ENCODE measurements at regions of chr3 and their contacts with region 1.

Region 1: DNA sequence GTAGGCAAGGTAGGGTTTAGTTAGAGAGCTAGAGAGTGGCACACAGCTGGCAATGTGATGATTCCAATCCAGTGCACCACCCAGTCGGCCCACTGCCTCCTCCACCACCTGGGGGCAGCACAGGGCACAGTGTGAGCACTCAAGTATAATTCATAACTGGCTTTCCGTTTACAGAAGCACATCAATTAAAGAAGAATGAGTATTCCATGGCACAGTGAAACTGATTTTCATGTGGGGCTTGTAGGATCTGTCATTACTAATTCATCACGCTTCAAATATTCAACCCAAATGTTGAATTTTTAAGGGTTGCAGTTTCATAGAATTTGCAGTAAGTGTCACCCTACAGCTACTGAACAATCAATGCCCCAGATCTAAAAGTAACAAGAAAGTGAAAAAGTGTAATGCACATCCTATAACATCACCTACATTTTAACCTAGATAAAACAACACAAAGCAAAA is 149.9 kb downstream of the IGSF11 start:
- DNase-seq: peak; percentile 87
- ATAC-seq: peak; percentile 87
- H3K4me3 Mint-ChIP-seq: no peak overlapping the region
- H3K27ac Mint-ChIP-seq: no peak overlapping the region
- H3K4me1 Mint-ChIP-seq: peaks cover 5% of the 10 kb centered on the region
- H3K27me3 Mint-ChIP-seq: peaks cover 12% of the 10 kb centered on the region
- CTCF ChIP-seq: peak; percentile 92

Region 2: DNA sequence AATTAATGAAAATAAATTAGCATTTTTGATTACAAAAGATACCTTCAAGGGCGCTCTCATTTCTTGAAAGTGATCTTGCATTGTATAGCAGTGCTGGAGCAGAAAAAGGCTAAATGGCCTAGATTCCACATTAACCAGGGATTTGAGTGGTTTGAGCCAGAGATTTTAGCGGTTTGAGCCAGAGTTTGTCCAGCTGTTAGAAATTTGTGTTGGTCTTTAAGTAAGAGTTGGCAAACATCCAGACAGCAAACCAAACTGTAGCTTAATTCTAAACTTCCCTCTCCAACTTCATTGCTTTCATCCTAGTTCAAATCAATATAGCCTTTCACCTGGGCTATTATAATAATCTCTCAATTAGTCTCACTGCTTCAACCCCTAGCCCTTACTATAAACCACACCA is 201.9 kb before region 1 on chr3:
- CTCF ChIA-PET with region 1: no interaction called
- POLR2A ChIA-PET with region 1: no interaction called
- intact Hi-C with region 1: no loop called
- DNase-seq: no peak
- ATAC-seq: no peak
- H3K4me3 Mint-ChIP-seq: no peak overlapping the region
- H3K27ac Mint-ChIP-seq: no peak overlapping the region
- H3K4me1 Mint-ChIP-seq: no peaks in the 10 kb centered on the region
- H3K27me3 Mint-ChIP-seq: no peaks in the 10 kb centered on the region
- CTCF ChIP-seq: no peak

Region 3: DNA sequence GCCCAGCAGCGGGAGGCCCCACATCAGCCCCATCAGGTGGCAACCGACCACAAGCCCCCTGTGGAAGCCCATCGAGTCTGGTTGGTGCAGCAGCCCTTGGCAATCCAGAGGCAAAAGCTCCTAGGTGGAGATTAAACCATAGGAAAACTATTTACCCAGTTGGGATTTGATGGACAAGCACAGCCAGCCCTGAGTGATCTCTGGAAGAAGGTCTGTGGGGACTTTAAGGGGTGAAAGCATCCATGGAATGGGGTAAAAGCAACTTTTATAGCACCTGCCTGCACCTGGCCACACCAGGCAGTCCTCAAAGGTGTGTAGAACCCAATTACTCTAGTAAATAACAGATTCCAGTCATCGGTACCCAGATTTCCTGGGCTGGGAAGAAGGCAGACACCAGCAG is 56.4 kb before region 1 on chr3:
- CTCF ChIA-PET with region 1: no interaction called
- POLR2A ChIA-PET with region 1: no interaction called
- intact Hi-C with region 1: no loop called
- DNase-seq: no peak
- ATAC-seq: no peak
- H3K4me3 Mint-ChIP-seq: no peak overlapping the region
- H3K27ac Mint-ChIP-seq: no peak overlapping the region
- H3K4me1 Mint-ChIP-seq: no peaks in the 10 kb centered on the region
- H3K27me3 Mint-ChIP-seq: peaks cover 3% of the 10 kb centered on the region
- CTCF ChIP-seq: no peak

Region 4: GRCh38 chr3:118932822-118933558 is 48.2 kb after region 1 on chr3:
- CTCF ChIA-PET with region 1: interaction called, 15 read pairs
- POLR2A ChIA-PET with region 1: no interaction called
- intact Hi-C with region 1: no loop called
- DNase-seq: no peak
- ATAC-seq: no peak
- H3K4me3 Mint-ChIP-seq: no peak overlapping the region
- H3K27ac Mint-ChIP-seq: no peak overlapping the region
- H3K4me1 Mint-ChIP-seq: peaks cover 6% of the 10 kb centered on the region
- H3K27me3 Mint-ChIP-seq: no peaks in the 10 kb centered on the region
- CTCF ChIP-seq: no peak

Region 5: GRCh38 chr3:118987477-118987876 is 102.7 kb after region 1 on chr3:
- CTCF ChIA-PET with region 1: interaction called, 15 read pairs
- POLR2A ChIA-PET with region 1: no interaction called
- intact Hi-C with region 1: no loop called
- DNase-seq: no peak
- ATAC-seq: no peak
- H3K4me3 Mint-ChIP-seq: no peak overlapping the region
- H3K27ac Mint-ChIP-seq: no peak overlapping the region
- H3K4me1 Mint-ChIP-seq: peaks cover 20% of the 10 kb centered on the region
- H3K27me3 Mint-ChIP-seq: peaks cover 2% of the 10 kb centered on the region
- CTCF ChIP-seq: no peak

Region 6: DNA sequence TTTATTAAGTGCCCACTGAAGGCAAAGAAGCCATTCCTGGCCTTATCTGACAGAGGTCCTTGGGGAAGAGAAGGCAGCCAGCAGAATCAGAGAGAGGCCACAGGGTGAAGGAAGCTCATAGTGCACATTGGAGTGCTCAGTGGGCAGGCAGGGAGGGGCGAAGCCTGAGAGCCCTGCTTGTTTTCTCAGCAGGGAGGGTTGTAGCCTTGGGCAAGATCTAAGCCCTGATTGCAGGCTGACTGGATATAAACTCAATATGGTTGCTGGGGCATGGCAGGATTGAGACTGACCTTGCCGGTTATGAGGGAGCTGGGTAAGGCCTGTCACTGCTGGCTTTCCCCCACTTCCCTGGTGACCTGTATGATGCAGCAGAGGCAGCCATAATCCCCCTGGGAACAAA is 157.4 kb after region 1 on chr3:
- CTCF ChIA-PET with region 1: interaction called, 305 read pairs
- POLR2A ChIA-PET with region 1: no interaction called
- intact Hi-C with region 1: no loop called
- DNase-seq: no peak
- ATAC-seq: no peak
- H3K4me3 Mint-ChIP-seq: no peak overlapping the region
- H3K27ac Mint-ChIP-seq: no peak overlapping the region
- H3K4me1 Mint-ChIP-seq: no peaks in the 10 kb centered on the region
- H3K27me3 Mint-ChIP-seq: peaks cover 20% of the 10 kb centered on the region
- CTCF ChIP-seq: no peak

Region 7: DNA sequence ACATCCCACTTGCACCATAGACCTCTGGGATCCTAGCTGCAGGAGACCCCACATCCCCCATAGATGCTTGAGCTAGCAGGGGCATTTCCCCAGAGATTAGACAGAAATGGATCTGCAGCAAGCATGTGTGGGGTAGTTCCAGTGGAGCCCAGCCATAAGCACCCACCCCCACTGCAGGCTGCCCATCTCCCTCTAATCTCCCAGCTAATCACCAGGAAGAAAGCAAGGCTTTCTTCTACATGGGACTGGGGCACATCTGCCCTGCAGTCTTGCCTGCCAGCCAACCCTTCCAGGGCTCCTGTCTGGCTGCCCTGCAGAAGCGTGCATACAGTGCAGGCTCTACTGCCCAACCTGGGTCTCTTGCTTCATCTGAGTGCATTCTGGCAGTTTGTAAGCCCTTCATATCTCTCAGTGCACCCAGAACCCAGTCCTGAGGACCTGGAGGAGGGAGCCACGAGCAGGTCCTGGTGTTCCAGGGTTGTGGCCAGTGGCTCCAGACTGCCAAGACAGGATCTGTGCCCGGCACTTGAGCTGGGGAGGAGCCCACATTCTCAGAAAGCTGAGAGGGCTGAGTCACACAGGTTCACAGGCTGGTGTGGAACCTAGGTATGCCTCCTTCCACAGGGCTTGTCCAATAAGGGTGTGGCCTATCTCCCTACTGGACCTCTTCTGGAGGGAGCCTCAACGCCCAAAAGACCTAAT is 199.7 kb after region 1 on chr3:
- CTCF ChIA-PET with region 1: interaction called, 399 read pairs
- POLR2A ChIA-PET with region 1: no interaction called
- intact Hi-C with region 1: no loop called
- DNase-seq: no peak
- ATAC-seq: no peak
- H3K4me3 Mint-ChIP-seq: no peak overlapping the region
- H3K27ac Mint-ChIP-seq: no peak overlapping the region
- H3K4me1 Mint-ChIP-seq: no peaks in the 10 kb centered on the region
- H3K27me3 Mint-ChIP-seq: peaks cover 4% of the 10 kb centered on the region
- CTCF ChIP-seq: no peak

Region 8: DNA sequence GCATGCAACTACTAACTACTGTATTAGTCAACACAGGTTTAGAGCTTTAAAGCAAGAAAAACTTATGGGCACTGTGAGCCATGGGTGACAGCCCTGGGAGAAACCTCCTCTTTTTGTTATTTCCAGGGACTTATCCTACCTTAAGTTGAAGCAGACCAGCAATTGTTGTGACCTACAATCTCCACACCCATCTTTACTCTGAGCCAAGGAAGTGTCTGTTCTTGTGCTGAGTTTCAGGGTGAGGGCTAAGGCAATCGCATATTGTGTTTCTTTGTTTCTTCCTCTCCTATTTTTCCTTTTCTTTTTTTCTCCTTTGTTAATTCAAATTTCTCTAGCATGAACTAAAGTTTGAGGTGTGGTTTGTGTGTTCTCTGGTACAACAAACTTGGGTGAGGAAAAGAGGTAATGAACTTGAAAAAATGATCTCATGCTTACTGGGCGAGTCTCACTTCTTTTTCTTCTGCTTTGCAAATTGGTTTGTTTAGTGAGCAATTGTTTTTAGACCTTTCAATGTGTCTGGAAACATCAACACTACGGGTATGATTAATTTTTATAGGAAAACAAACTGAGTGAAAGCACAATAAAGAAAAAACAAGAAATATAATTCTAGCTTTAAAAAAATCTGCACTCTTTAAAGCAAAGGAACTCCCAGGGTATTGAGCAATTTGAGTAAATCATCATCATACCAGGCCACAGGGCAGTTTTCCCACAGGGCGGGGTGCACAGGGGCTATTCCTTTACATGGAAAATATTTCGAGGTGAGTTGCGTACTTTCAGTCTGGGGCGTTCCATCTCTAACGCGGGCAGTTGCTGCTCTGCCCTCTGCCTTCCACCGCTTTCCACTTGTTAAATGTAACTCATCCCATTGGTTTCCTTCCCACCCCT is 291.3 kb after region 1 on chr3:
- CTCF ChIA-PET with region 1: no interaction called
- POLR2A ChIA-PET with region 1: no interaction called
- intact Hi-C with region 1: no loop called
- DNase-seq: no peak
- ATAC-seq: no peak
- H3K4me3 Mint-ChIP-seq: no peak overlapping the region
- H3K27ac Mint-ChIP-seq: no peak overlapping the region
- H3K4me1 Mint-ChIP-seq: no peaks in the 10 kb centered on the region
- H3K27me3 Mint-ChIP-seq: peaks cover 15% of the 10 kb centered on the region
- CTCF ChIP-seq: no peak

Region 9: GRCh38 chr3:119240591-119241434 is 356.0 kb after region 1 on chr3 and contains the start of gene B4GALT4:
- CTCF ChIA-PET with region 1: interaction called, 51 read pairs
- POLR2A ChIA-PET with region 1: no interaction called
- intact Hi-C with region 1: loop called (anchors 5 kb)
- DNase-seq: peak; percentile 81
- ATAC-seq: peak; percentile 78
- H3K4me3 Mint-ChIP-seq: peak within 1 kb of the TSS; percentile 83
- H3K27ac Mint-ChIP-seq: peak within 1 kb of the TSS; percentile 99
- H3K4me1 Mint-ChIP-seq: peaks cover 36% of the 10 kb centered on the region
- H3K27me3 Mint-ChIP-seq: no peaks in the 10 kb centered on the region
- CTCF ChIP-seq: no peak
- total RNA-seq, gene B4GALT4: 13.3 to 15.2 TPM